CD8-positive, alpha-beta T cell (primary cell): ENCODE measurements at regions of chr12 and their contacts with region 1.

Region 1: GRCh38 chr12:70242695-70243509 is at the start of gene CNOT2:
- DNase-seq: peak; percentile 79 to 96 (median 91)
- ATAC-seq: peak; percentile 78
- H3K4me3 ChIP-seq: peak within 1 kb of the TSS; percentile 94 to 96
- H3K4me3 Mint-ChIP-seq: peak within 1 kb of the TSS; percentile 100
- H3K27ac ChIP-seq: peak within 1 kb of the TSS; percentile 97 to 99
- H3K27ac Mint-ChIP-seq: peak within 1 kb of the TSS; percentile 100
- H3K4me1 ChIP-seq: peaks cover 57% of the 10 kb centered on the region
- H3K4me1 Mint-ChIP-seq: peaks cover 60% of the 10 kb centered on the region
- H3K27me3 ChIP-seq: no peaks in the 10 kb centered on the region
- H3K27me3 Mint-ChIP-seq: no peaks in the 10 kb centered on the region
- CTCF ChIP-seq: no peak
- total RNA-seq, gene CNOT2: 154 to 158 TPM

Region 2: DNA sequence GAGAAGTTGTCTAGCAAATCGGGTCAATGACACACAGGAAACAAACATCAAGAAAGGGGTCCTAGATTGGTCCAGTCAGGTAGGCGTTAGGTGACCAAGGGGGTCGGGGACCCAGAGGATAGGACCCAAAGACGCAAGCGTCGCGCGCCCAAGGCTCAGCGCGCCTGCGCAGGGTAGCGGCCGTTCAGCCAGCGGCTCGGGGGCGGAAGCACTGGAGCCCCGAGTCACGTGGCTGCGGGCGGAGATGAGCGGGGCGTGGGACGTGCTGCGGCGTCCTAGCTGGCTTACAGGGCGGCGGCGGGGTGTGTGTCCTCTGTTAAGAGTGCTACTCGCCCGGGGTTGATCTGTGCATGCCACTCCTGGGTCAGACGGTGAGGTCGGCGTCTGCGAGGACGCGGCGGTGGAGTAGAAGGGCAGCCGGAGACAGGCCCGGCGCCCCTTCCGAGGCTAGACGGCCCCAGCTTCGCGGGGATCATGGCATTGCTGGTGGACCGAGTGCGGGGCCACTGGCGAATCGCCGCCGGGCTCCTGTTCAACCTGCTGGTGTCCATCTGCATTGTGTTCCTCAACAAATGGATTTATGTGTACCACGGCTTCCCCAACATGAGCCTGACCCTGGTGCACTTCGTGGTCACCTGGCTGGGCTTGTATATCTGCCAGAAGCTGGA is 1496.9 kb before region 1 on chr12 and contains the start of gene SLC35E3:
- CTCF ChIA-PET with region 1: no interaction called
- POLR2A ChIA-PET with region 1: no interaction called
- intact Hi-C with region 1: loop called in 1 of 2 experiments (anchors 5 kb)
- DNase-seq: peak; percentile 83 to 95 (median 90)
- ATAC-seq: peak; percentile 96
- H3K4me3 ChIP-seq: peak within 1 kb of the TSS; percentile 80 to 96
- H3K4me3 Mint-ChIP-seq: peak within 1 kb of the TSS; percentile 98
- H3K27ac ChIP-seq: peak within 1 kb of the TSS; percentile 73 to 76
- H3K27ac Mint-ChIP-seq: peak within 1 kb of the TSS; percentile 97
- H3K4me1 ChIP-seq: peaks cover 21% of the 10 kb centered on the region
- H3K4me1 Mint-ChIP-seq: peaks cover 48% of the 10 kb centered on the region
- H3K27me3 ChIP-seq: no peaks in the 10 kb centered on the region
- H3K27me3 Mint-ChIP-seq: no peaks in the 10 kb centered on the region
- CTCF ChIP-seq: no peak
- total RNA-seq, gene SLC35E3: 4.0 to 5.7 TPM

Region 3: DNA sequence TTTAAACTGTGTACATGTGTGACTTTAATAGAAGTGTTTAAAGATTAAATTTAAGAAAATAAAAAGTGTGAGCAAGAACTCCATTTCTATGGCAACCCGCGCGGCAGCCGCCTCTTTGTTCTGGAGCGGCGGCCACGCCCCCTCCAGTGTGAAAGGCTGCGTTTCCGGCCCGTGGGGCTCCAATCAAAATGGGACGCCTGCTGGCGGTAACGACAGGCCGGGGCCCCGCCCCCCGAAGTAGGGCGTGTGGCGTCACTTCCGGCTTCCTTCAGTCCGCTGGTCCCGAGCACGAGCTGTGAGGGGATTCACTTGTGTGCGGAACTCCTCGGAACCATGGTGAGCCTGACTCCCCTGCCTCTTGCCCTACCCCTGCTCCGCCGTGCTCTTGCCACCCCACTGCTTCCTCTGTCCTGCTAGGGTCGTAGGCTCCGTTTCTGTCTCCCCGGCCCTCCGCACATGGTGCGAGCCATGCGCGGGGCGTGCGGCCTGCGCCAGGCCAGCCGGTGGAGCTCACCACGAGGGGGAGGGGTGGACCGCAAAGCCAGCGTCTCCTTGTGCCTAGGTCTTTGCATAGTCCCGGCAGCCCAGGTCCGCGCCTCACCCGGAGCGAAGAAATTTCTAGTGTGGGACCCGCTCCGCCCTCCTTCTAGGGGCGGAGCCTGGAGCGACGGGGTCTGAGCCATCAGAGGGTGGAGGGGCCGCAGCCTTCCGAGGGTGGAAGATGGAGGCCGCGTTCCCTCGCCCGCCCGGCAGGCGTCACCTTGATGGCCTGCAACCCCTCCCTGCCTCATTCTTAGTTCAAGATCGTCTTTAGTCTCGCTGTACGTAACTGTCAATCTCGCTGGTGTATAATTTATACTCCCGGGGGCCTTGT is 657.5 kb before region 1 on chr12 and contains the start of gene CCT2:
- CTCF ChIA-PET with region 1: no interaction called
- POLR2A ChIA-PET with region 1: no interaction called
- intact Hi-C with region 1: loop called (anchors 5 to 10 kb)
- DNase-seq: peak; percentile 92 to 98 (median 97)
- ATAC-seq: peak; percentile 88
- H3K4me3 ChIP-seq: peak within 1 kb of the TSS; percentile 88 to 98
- H3K4me3 Mint-ChIP-seq: peak within 1 kb of the TSS; percentile 96
- H3K27ac ChIP-seq: peak within 1 kb of the TSS; percentile 94 to 99
- H3K27ac Mint-ChIP-seq: peak within 1 kb of the TSS; percentile 96
- H3K4me1 ChIP-seq: peaks cover 11% of the 10 kb centered on the region
- H3K4me1 Mint-ChIP-seq: peaks cover 26% of the 10 kb centered on the region
- H3K27me3 ChIP-seq: no peaks in the 10 kb centered on the region
- H3K27me3 Mint-ChIP-seq: no peaks in the 10 kb centered on the region
- CTCF ChIP-seq: peak; percentile 22
- total RNA-seq, gene CCT2: 211 to 220 TPM

Region 4: GRCh38 chr12:70277973-70278372 is 35.1 kb after region 1 on chr12:
- CTCF ChIA-PET with region 1: no interaction called
- POLR2A ChIA-PET with region 1: no interaction called
- intact Hi-C with region 1: loop called in 1 of 2 experiments (anchors 5 kb)
- DNase-seq: no peak
- ATAC-seq: no peak
- H3K4me3 ChIP-seq: no peak overlapping the region
- H3K4me3 Mint-ChIP-seq: no peak overlapping the region
- H3K27ac ChIP-seq: no peak overlapping the region
- H3K27ac Mint-ChIP-seq: peak overlapping the region; percentile 3
- H3K4me1 ChIP-seq: no peaks in the 10 kb centered on the region
- H3K4me1 Mint-ChIP-seq: peaks cover 65% of the 10 kb centered on the region
- H3K27me3 ChIP-seq: no peaks in the 10 kb centered on the region
- H3K27me3 Mint-ChIP-seq: no peaks in the 10 kb centered on the region
- CTCF ChIP-seq: no peak

Region 5: DNA sequence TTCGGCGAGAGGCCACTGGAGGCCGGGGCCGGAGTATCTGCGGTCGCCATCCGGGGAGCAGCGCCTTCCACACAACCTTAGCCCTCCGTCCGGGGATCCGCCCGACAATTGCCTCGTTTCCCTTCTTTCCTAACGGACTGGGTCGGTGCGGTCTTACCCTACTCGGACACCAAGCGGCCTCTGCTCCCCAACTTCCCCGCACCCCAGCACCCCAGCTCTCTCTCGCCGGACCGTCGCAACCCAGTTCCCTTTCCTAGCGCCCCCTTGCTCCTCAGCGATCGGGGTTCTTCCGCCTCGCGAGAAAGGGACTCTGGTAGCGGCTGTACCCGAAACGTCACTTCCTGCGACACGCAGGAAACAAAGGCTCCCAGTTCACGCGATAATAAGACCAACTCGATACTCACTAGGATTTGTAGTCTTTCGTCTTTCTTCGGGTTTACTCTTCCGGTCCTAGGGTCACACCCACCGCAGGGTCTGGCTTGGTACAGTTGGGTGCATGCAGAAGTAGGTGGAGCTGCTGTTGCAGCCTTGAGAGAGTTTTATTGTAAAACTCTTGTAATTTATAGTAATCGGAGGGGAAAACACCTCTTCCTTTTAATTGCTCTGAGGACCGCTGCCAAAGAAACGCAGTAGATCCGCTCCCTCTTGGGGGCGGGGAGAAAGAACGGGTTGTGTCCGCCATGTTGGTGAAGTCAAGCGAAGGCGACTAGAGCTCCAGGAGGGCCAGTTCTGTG is 1420.8 kb after region 1 on chr12 and contains the start of gene ZFC3H1:
- CTCF ChIA-PET with region 1: no interaction called
- POLR2A ChIA-PET with region 1: no interaction called
- intact Hi-C with region 1: loop called (anchors 5 kb)
- DNase-seq: peak; percentile 76 to 99 (median 88)
- ATAC-seq: peak; percentile 74
- H3K4me3 ChIP-seq: peak within 1 kb of the TSS; percentile 79 to 94
- H3K4me3 Mint-ChIP-seq: peak within 1 kb of the TSS; percentile 100
- H3K27ac ChIP-seq: peak within 1 kb of the TSS; percentile 92 to 97
- H3K27ac Mint-ChIP-seq: peak within 1 kb of the TSS; percentile 100
- H3K4me1 ChIP-seq: peaks cover 36% of the 10 kb centered on the region
- H3K4me1 Mint-ChIP-seq: peaks cover 55% of the 10 kb centered on the region
- H3K27me3 ChIP-seq: no peaks in the 10 kb centered on the region
- H3K27me3 Mint-ChIP-seq: no peaks in the 10 kb centered on the region
- CTCF ChIP-seq: no peak
- total RNA-seq, gene ZFC3H1: 118 to 121 TPM